Activated naive CD4-positive, alpha-beta T cell treated with anti-CD3 and anti-CD28 coated beads for 36 hours (primary cell): ENCODE measurements at regions of chr14 and their contacts with region 1.

Region 1: DNA sequence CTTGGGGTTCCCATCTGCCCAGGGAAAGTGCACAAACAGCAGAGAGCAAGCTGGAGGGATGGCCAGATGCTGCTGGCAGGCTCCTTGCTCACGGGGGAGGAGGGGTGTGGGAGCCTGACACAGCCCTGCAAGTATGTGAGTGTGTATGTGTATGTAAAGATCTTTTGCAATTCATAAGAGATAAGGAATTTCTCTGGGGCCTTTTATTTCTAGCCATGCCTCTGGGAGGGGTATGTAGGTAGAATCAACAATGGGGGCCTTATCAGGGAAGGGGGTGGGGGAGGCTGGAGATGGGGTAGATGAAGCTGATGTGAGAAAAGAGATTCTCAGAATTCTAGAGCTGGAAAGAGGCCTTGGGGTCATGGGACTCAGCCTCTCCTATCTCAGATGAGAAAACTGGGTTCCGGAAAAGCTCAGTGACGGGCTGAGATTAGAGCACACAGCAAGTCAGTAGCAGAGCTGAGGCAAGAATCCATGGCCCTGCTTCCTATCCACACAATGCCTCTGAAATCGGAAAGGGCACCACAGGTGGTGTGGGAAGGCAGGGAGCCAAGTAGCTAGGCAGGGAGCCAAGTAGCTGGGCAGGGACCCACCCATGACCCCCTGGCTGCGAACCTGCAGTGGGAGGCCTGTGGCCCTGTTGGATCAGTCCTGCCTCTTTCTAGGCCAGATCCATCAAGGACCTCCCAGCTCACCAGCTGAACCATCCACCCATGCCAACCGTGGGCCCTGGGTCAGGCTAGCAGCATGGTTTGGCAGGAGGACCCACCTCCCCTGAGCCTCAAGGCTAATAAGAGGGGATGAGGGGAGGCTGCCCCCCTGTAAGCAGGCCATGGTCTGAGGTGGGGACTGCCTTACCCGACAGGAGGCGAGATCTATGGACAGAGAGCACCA is 54.7 kb downstream of the PLEKHG3 start:
- DNase-seq: no peak
- H3K4me3 Mint-ChIP-seq: no peak overlapping the region
- H3K27ac Mint-ChIP-seq: no peak overlapping the region
- H3K4me1 Mint-ChIP-seq: peaks cover 1% of the 10 kb centered on the region
- H3K27me3 Mint-ChIP-seq: no peaks in the 10 kb centered on the region

Region 2: DNA sequence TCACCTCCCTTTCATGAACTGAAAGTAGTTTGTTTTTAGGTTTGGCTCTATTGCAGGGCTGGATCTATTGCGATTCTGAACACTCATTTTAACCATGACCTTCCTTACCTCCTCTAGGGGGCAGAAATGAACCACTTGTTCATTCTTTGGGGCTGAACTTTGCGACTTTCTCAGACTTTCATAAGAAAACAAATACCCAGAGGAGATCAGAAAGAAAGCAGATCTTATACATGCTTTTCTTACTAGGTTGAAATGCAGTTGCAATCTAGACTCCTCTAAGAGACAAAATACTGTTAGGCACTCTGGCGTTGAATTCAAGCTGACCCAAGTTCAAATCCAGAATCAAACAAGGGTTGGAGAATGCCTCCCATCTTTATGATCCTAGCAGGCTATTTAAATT is 87.3 kb before region 1 on chr14:
- CTCF ChIA-PET with region 1: interaction called, 67 read pairs
- intact Hi-C with region 1: loop called (anchors 1 kb)
- DNase-seq: no peak
- H3K4me3 Mint-ChIP-seq: no peak overlapping the region
- H3K27ac Mint-ChIP-seq: no peak overlapping the region
- H3K4me1 Mint-ChIP-seq: peaks cover 16% of the 10 kb centered on the region
- H3K27me3 Mint-ChIP-seq: no peaks in the 10 kb centered on the region